Activated CD4-positive, alpha-beta T cell treated with anti-CD3 and anti-CD28 coated beads for 36 hours (primary cell): ENCODE measurements at regions of chr11 and their contacts with region 1.

Region 1: DNA sequence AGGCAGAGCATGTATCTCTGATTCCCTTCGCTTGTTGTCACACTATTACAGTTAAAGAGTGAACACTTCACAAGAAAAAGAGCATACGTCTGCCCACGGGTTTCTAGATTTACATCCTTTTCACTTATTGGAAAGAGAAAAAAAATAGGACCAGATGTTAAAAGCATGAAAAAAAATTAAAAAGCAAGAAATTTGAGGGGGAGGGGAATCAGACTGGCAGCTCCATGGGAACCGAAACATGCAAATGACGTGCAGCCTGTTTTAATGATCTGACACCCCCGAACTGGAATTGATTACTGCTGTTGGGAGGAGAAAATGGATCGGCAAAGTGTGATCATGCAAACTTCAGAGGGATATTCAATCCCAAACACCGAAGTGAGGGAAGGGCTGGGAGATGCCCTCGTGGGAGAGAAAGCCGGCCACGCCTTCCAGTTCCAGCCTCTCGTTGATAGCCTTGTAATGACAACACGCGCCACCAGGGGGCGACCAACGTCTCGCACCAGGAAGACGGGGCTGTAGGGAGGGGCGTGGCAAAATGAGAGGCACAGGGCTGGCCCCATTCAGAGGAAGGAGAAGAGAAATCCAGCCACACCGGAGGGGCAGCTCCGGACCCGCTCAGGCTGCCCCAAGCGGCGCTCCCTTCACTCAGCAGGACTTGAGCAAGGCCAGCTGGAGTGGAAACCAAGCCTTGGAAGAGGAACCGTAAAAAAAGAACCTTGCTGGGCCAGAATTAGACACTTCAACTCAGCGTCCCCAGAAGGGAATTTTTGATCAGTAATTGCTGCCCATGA is 53.8 kb upstream of the SYT13 start:
- DNase-seq: peak; percentile 97
- ATAC-seq: peak; percentile 99
- H3K4me3 Mint-ChIP-seq: peak overlapping the region; percentile 55
- H3K27ac Mint-ChIP-seq: no peak overlapping the region
- H3K4me1 Mint-ChIP-seq: peaks cover 10% of the 10 kb centered on the region
- H3K27me3 Mint-ChIP-seq: peaks cover 4% of the 10 kb centered on the region

Region 2: GRCh38 chr11:44950625-44951476 is 389.1 kb before region 1 on chr11 and contains the start of gene TP53I11:
- CTCF ChIA-PET with region 1: interaction called, 4 read pairs
- POLR2A ChIA-PET with region 1: no interaction called
- intact Hi-C with region 1: loop called in 1 of 2 experiments (anchors 10 kb)
- DNase-seq: peak; percentile 84
- ATAC-seq: peak; percentile 76
- H3K4me3 Mint-ChIP-seq: peak within 1 kb of the TSS; percentile 71
- H3K27ac Mint-ChIP-seq: no peak within 1 kb of the TSS
- H3K4me1 Mint-ChIP-seq: peaks cover 10% of the 10 kb centered on the region
- H3K27me3 Mint-ChIP-seq: no peaks in the 10 kb centered on the region
- total RNA-seq, gene TP53I11: 14.3 to 15.8 TPM

Region 3: DNA sequence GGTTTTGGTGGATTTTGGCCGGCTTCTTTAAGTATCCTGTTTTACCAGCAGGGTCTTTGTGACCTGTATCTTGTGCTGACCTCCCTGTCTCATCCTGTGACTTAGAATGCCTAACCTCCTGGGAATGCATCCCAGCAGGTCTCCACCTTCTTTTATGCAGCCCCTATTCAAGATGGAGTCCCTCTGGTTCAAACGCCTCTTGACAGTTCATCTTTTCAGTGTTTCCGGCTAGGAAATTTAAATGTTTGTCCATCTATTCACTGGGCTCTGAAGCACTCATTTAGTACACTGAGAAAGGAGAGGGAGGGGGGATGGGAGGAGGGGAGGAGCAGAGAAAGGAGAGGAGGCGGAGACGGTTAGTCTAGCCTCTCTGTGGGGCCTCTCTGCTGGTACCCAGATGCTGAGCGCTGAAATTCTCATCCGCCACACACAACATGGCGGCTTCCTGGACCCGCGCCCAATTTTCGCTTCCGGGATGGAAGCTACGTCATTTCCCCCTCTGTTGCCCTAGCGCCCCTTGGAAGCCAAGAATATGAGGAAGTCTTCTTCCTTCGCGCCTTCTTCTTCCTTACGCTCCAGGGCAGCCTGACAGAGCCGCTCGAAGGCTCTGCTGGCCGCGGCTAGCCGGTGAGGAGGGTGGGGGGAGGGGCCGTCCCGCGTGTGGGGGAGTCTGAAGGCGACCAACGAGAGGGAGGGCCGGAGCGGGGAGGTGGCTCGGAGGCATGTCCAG is 15.2 kb after region 1 on chr11:
- CTCF ChIA-PET with region 1: interaction called, 11 read pairs
- POLR2A ChIA-PET with region 1: no interaction called
- intact Hi-C with region 1: loop called (anchors 1 kb)
- DNase-seq: peak; percentile 93
- ATAC-seq: peak; percentile 97
- H3K4me3 Mint-ChIP-seq: peak overlapping the region; percentile 75
- H3K27ac Mint-ChIP-seq: peak overlapping the region; percentile 72
- H3K4me1 Mint-ChIP-seq: peaks cover 21% of the 10 kb centered on the region
- H3K27me3 Mint-ChIP-seq: peaks cover 2% of the 10 kb centered on the region